Endothelial cell of umbilical vein (primary cell): ENCODE measurements at regions of chr3 and their contacts with region 1.

Region 1: GRCh38 chr3:182713743-182714517 is 79.4 kb upstream of the ATP11B start:
- DNase-seq: peak; percentile 75
- H3K4me3 ChIP-seq: no peak overlapping the region
- H3K27ac ChIP-seq: no peak overlapping the region
- H3K4me1 ChIP-seq: peaks cover 5% of the 10 kb centered on the region
- H3K27me3 ChIP-seq: no peaks in the 10 kb centered on the region
- CTCF ChIP-seq: peak; percentile 40 to 53
- POLR2A ChIP-seq: no peak

Region 2: GRCh38 chr3:182690172-182690571 is 23.8 kb before region 1 on chr3:
- CTCF ChIA-PET with region 1: no interaction called
- POLR2A ChIA-PET with region 1: no interaction called
- dilution Hi-C with region 1: no loop called
- intact Hi-C with region 1: no loop called
- DNase-seq: no peak
- H3K4me3 ChIP-seq: no peak overlapping the region
- H3K27ac ChIP-seq: no peak overlapping the region
- H3K4me1 ChIP-seq: no peaks in the 10 kb centered on the region
- H3K27me3 ChIP-seq: peaks cover 0 to 11% of the 10 kb centered on the region in 2 experiments
- CTCF ChIP-seq: no peak
- POLR2A ChIP-seq: no peak

Region 3: DNA sequence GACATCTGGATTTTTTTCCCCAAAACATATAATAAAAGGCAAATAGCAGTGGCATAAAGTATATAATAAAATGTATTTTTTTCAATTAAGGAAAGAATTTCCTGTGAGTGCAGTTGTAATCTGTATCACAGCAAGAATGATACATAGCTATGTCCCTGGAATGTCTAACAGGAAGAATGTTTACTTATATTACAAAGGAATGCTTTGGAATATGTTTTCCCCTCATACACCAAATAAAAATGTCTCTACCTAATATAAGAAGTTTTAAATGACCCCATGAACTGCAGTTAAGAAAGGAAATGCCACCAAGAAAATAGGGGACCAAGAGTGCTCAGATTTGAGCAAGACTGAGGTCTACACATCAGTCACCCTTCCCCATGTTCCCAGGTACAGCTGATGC is 41.4 kb after region 1 on chr3:
- CTCF ChIA-PET with region 1: interaction called, 8 read pairs
- POLR2A ChIA-PET with region 1: no interaction called
- dilution Hi-C with region 1: no loop called
- intact Hi-C with region 1: loop called (anchors 2 kb)
- DNase-seq: peak; percentile 56
- H3K4me3 ChIP-seq: no peak overlapping the region
- H3K27ac ChIP-seq: peak overlapping the region; percentile 60
- H3K4me1 ChIP-seq: peaks cover 17% of the 10 kb centered on the region
- H3K27me3 ChIP-seq: no peaks in the 10 kb centered on the region
- CTCF ChIP-seq: no peak
- POLR2A ChIP-seq: no peak

Region 4: GRCh38 chr3:182837855-182838454 is 124.0 kb after region 1 on chr3:
- CTCF ChIA-PET with region 1: interaction called, 217 read pairs
- POLR2A ChIA-PET with region 1: no interaction called
- dilution Hi-C with region 1: no loop called
- intact Hi-C with region 1: loop called (anchors 1 kb)
- DNase-seq: peak; percentile 51
- H3K4me3 ChIP-seq: no peak overlapping the region
- H3K27ac ChIP-seq: no peak overlapping the region
- H3K4me1 ChIP-seq: peaks cover 1% of the 10 kb centered on the region
- H3K27me3 ChIP-seq: no peaks in the 10 kb centered on the region
- CTCF ChIP-seq: peak; percentile 21 to 34
- POLR2A ChIP-seq: no peak

Region 5: GRCh38 chr3:182861348-182861747 is 147.4 kb after region 1 on chr3:
- CTCF ChIA-PET with region 1: interaction called, 25 read pairs
- POLR2A ChIA-PET with region 1: no interaction called
- dilution Hi-C with region 1: no loop called
- intact Hi-C with region 1: no loop called
- DNase-seq: no peak
- H3K4me3 ChIP-seq: no peak overlapping the region
- H3K27ac ChIP-seq: no peak overlapping the region
- H3K4me1 ChIP-seq: no peaks in the 10 kb centered on the region
- H3K27me3 ChIP-seq: no peaks in the 10 kb centered on the region
- CTCF ChIP-seq: no peak
- POLR2A ChIP-seq: no peak

Region 6: DNA sequence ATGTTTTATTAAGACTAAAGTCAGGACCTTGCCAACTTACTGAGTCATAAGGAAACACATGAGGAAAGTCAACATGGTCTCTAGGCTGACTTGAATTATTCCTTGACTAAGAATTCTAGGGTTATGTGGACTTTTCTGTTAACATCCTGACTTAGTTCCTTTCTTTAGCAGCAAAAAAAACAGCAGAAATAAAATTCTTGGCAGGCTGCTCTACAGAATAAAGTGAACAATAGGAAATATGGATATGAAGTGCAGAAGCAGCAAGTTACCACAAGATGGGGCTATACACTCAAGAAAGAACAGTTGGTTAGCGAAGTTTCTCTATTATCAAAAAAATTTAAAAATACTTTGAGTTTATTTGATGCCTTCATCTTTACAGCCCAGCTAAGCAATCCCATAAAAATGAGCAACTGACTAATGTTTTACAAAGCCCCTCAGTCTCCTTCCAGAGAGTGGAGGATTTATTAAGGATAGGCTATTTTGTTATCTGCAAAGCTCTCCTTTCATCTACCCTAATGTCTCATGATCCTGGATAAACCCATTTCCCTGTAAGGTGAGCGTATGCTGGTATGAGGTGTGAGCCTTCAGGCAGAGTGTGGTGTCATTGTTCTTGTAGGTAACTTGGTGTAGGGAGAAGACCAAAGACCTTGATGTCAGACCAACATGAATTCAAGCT is 408.5 kb after region 1 on chr3:
- CTCF ChIA-PET with region 1: interaction called, 11 read pairs
- POLR2A ChIA-PET with region 1: no interaction called
- dilution Hi-C with region 1: no loop called
- intact Hi-C with region 1: loop called (anchors 1 kb)
- DNase-seq: peak; percentile 95
- H3K4me3 ChIP-seq: no peak overlapping the region
- H3K27ac ChIP-seq: peak overlapping the region; percentile 58
- H3K4me1 ChIP-seq: peaks cover 27% of the 10 kb centered on the region
- H3K27me3 ChIP-seq: peaks cover 3 to 4% of the 10 kb centered on the region in 2 experiments
- CTCF ChIP-seq: peak; percentile 56 to 66
- POLR2A ChIP-seq: no peak

Region 7: DNA sequence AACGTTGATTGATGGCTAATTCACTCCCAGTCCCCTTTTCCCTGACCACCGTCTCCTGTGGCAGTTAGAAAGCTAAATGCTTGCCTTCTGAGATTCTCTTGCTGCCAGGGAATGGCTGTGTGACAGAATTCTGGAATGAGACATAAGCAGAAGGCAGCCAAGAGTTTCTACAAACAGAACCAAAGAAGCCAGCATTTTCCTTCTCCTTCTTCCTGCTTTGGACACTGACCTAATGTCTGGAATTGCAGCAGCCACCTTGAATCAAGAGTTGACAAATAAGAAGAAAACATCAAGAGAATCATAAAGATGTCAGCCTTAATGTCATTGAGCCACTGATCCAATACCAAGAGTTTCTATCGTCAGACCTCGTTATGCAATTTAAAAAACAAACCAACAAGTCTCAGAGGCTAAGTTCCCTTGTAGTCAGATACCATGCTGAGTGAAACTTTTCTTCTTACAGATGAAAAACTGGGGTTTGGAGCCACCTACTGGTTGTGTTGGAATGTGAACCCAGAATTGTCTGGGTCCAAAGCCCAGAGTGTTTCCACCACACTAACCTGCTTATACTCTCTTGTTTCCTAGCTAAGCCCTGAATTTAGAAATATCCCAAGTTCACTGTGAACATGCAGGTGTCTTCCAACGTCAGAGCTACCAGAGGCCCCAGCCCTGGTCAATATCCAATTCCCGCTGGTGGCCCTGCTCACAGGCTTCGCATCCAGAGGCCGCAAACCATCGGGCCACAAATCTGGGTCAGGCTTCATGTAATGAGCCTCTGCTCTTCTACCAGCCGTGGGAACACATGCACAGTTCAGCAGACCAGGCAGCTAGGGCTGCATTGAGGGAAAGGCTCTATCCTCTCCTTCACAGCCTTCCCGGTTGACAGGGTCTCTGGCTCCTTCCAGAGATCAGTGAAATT is 672.0 kb after region 1 on chr3:
- CTCF ChIA-PET with region 1: interaction called, 11 read pairs
- POLR2A ChIA-PET with region 1: no interaction called
- dilution Hi-C with region 1: no loop called
- intact Hi-C with region 1: loop called (anchors 1 kb)
- DNase-seq: peak; percentile 76
- H3K4me3 ChIP-seq: no peak overlapping the region
- H3K27ac ChIP-seq: no peak overlapping the region
- H3K4me1 ChIP-seq: no peaks in the 10 kb centered on the region
- H3K27me3 ChIP-seq: no peaks in the 10 kb centered on the region
- CTCF ChIP-seq: peak; percentile 65 to 71
- POLR2A ChIP-seq: no peak